ENCODE measurements at regions of chr1 and their contacts with region 1.

Region 1: DNA sequence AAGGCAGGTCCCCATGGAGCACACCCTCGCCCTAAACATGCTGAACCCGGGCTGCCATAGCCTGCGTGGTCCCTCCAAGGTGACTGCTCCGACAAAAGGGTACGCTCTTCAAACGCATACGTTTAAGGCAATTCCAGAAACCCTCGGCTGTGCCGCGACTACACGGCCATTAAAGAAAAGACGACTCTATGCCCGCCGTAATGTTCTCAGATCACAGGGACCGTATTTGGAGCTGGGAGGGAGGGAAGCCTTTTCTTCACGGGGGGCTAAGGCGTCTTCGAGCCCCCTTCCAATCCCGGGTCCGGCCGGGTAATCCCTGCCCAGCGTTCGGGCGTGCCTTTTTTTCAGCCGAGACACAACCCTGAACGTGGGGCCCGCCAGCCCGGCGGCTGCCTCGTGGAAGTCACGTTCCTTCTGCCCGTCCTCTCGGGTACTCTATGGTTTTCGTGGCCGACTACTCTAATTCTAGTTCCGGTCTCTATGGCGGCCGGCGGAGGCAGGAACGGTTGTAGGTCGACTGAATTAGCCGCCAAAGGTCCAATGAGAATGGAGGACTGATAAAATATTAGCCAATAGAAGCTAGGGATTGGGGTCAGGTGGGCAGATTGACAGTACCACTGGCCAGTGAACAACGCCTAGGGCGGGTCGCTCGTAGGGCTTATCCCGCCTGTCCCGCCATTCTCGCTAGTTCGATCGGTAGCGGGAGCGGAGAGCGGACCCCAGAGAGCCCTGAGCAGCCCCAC is at the start of gene YBX1:
- DNase-seq: peak; percentile 98
- ATAC-seq: peak; percentile 86
- H3K4me3 ChIP-seq: peak within 1 kb of the TSS; percentile 64 to 94 (median 82)
- H3K4me3 Mint-ChIP-seq: peak within 1 kb of the TSS; percentile 99
- H3K27ac ChIP-seq: peak within 1 kb of the TSS; percentile 80 to 97
- H3K27ac Mint-ChIP-seq: peak within 1 kb of the TSS; percentile 100
- H3K4me1 ChIP-seq: peaks cover 48 to 50% of the 10 kb centered on the region in 2 donors
- H3K4me1 Mint-ChIP-seq: peaks cover 54% of the 10 kb centered on the region
- H3K27me3 ChIP-seq: no peaks in the 10 kb centered on the region
- H3K27me3 Mint-ChIP-seq: no peaks in the 10 kb centered on the region
- CTCF ChIP-seq: no peak
- total RNA-seq, gene YBX1: 314 and 345 TPM in 2 replicates

Region 2: GRCh38 chr1:42035830-42036604 is 645.9 kb before region 1 on chr1:
- CTCF ChIA-PET with region 1: no interaction called
- POLR2A ChIA-PET with region 1: no interaction called
- intact Hi-C with region 1: loop called (anchors 2 kb)
- DNase-seq: peak; percentile 95
- ATAC-seq: peak; percentile 94
- H3K4me3 ChIP-seq: peak overlapping the region; percentile 13 to 93 (median 83)
- H3K4me3 Mint-ChIP-seq: peak overlapping the region; percentile 72
- H3K27ac ChIP-seq: peak overlapping the region in 1 of 2 donors; percentile 34
- H3K27ac Mint-ChIP-seq: peak overlapping the region; percentile 67
- H3K4me1 ChIP-seq: peaks cover 13 to 15% of the 10 kb centered on the region in 2 donors
- H3K4me1 Mint-ChIP-seq: peaks cover 12% of the 10 kb centered on the region
- H3K27me3 ChIP-seq: peaks cover 0 to 6% (median 0%) of the 10 kb centered on the region in 4 experiments
- H3K27me3 Mint-ChIP-seq: peaks cover 13% of the 10 kb centered on the region
- CTCF ChIP-seq: no peak

Region 3: GRCh38 chr1:42157667-42158066 is 524.2 kb before region 1 on chr1:
- CTCF ChIA-PET with region 1: no interaction called
- POLR2A ChIA-PET with region 1: no interaction called
- intact Hi-C with region 1: no loop called
- DNase-seq: no peak
- ATAC-seq: no peak
- H3K4me3 ChIP-seq: no peak overlapping the region
- H3K4me3 Mint-ChIP-seq: no peak overlapping the region
- H3K27ac ChIP-seq: no peak overlapping the region
- H3K27ac Mint-ChIP-seq: no peak overlapping the region
- H3K4me1 ChIP-seq: no peaks in the 10 kb centered on the region
- H3K4me1 Mint-ChIP-seq: no peaks in the 10 kb centered on the region
- H3K27me3 ChIP-seq: no peaks in the 10 kb centered on the region
- H3K27me3 Mint-ChIP-seq: peaks cover 9% of the 10 kb centered on the region
- CTCF ChIP-seq: no peak

Region 4: DNA sequence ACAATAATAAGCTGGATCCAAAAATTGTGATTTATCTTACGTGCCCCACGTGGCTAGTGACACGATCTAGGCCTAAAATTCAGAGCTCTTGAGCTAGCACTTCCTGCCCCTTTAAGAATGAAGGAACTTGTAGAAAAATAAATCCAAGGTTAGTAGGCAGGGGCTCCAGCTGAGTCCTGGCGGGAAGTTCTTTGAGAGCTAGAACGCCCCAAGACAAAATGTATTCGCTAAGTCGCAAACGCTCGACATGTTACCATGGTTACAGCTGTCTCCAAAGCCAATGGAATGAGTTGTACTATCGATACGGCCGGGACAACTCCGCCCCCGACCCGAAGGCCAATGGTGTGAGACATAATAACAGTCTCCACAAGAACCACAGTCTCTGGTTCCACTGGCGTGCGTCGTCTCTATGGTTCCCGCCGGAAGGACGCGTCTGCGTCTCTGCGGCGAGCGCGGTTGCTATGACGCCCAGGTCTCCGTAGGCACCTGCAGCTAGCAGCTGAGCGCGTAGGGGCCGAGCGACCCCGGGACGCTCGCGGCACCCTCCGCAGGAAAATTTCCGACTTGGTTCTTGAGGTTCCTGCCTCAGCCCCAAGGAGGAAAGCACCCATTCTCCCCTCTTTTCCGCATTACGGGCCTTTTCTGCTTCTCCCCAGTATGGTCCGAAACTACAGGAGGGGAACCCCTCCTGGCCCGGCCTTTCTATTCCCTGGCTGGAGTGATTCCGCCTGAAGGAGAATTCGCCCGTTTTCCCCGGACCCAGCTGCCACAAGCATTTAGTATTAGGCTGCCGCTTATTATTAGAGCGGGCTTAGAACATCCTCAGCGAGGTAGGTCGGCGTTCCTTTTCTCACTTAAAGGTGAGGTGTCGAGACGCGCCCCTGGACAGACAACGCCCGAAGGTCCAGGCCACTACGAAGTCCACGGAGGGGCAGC is 218.8 kb before region 1 on chr1 and contains the start of gene CCDC30:
- CTCF ChIA-PET with region 1: no interaction called
- POLR2A ChIA-PET with region 1: no interaction called
- intact Hi-C with region 1: loop called (anchors 1 kb)
- DNase-seq: peak; percentile 99
- ATAC-seq: peak; percentile 99
- H3K4me3 ChIP-seq: peak within 1 kb of the TSS; percentile 19 to 71 (median 65)
- H3K4me3 Mint-ChIP-seq: peak within 1 kb of the TSS; percentile 73
- H3K27ac ChIP-seq: peak within 1 kb of the TSS; percentile 70 to 84
- H3K27ac Mint-ChIP-seq: peak within 1 kb of the TSS; percentile 93
- H3K4me1 ChIP-seq: peaks cover 15 to 18% of the 10 kb centered on the region in 2 donors
- H3K4me1 Mint-ChIP-seq: peaks cover 40% of the 10 kb centered on the region
- H3K27me3 ChIP-seq: no peaks in the 10 kb centered on the region
- H3K27me3 Mint-ChIP-seq: no peaks in the 10 kb centered on the region
- CTCF ChIP-seq: no peak
- total RNA-seq, gene CCDC30: 7.4 and 9.8 TPM in 2 replicates

Region 5: GRCh38 chr1:42816585-42817434 is 134.9 kb after region 1 on chr1 and contains the starts of genes ERMAP and SVBP:
- CTCF ChIA-PET with region 1: no interaction called
- POLR2A ChIA-PET with region 1: interaction called, 4 read pairs
- intact Hi-C with region 1: loop called (anchors 1 kb)
- DNase-seq: peak; percentile 97
- ATAC-seq: peak; percentile 86
- H3K4me3 ChIP-seq: peak within 1 kb of the TSS; percentile 57 to 82 (median 77)
- H3K4me3 Mint-ChIP-seq: peak within 1 kb of the TSS; percentile 89
- H3K27ac ChIP-seq: peak within 1 kb of the TSS; percentile 75 to 82
- H3K27ac Mint-ChIP-seq: peak within 1 kb of the TSS; percentile 92
- H3K4me1 ChIP-seq: peaks cover 13% of the 10 kb centered on the region in 2 donors
- H3K4me1 Mint-ChIP-seq: peaks cover 20% of the 10 kb centered on the region
- H3K27me3 ChIP-seq: no peaks in the 10 kb centered on the region
- H3K27me3 Mint-ChIP-seq: no peaks in the 10 kb centered on the region
- CTCF ChIP-seq: no peak
- total RNA-seq, gene ERMAP: 13.1 and 13.5 TPM in 2 replicates
- total RNA-seq, gene SVBP: 21.9 and 23.2 TPM in 2 replicates

Region 6: GRCh38 chr1:42877380-42877779 is 195.5 kb after region 1 on chr1:
- CTCF ChIA-PET with region 1: no interaction called
- POLR2A ChIA-PET with region 1: interaction called, 12 read pairs
- intact Hi-C with region 1: no loop called
- DNase-seq: no peak
- ATAC-seq: no peak
- H3K4me3 ChIP-seq: no peak overlapping the region
- H3K4me3 Mint-ChIP-seq: no peak overlapping the region
- H3K27ac ChIP-seq: no peak overlapping the region
- H3K27ac Mint-ChIP-seq: no peak overlapping the region
- H3K4me1 ChIP-seq: no peaks in the 10 kb centered on the region
- H3K4me1 Mint-ChIP-seq: no peaks in the 10 kb centered on the region
- H3K27me3 ChIP-seq: peaks cover 0 to 15% (median 1%) of the 10 kb centered on the region in 4 experiments
- H3K27me3 Mint-ChIP-seq: peaks cover 4% of the 10 kb centered on the region
- CTCF ChIP-seq: no peak

Measured in B cell (primary cell).